Lower lobe of right lung (tissue), 2 donors: ENCODE measurements at regions of chr5 and their contacts with region 1.

Region 1: GRCh38 chr5:53095931-53096525 is 13.5 kb downstream of the MOCS2 start:
- DNase-seq: no peak
- ATAC-seq: peak; percentile 83 to 88
- H3K4me3 ChIP-seq: no peak overlapping the region
- H3K27ac ChIP-seq: no peak overlapping the region
- H3K4me1 ChIP-seq: no peaks in the 10 kb centered on the region
- H3K27me3 ChIP-seq: no peaks in the 10 kb centered on the region
- CTCF ChIP-seq: peak; percentile 89

Region 2: DNA sequence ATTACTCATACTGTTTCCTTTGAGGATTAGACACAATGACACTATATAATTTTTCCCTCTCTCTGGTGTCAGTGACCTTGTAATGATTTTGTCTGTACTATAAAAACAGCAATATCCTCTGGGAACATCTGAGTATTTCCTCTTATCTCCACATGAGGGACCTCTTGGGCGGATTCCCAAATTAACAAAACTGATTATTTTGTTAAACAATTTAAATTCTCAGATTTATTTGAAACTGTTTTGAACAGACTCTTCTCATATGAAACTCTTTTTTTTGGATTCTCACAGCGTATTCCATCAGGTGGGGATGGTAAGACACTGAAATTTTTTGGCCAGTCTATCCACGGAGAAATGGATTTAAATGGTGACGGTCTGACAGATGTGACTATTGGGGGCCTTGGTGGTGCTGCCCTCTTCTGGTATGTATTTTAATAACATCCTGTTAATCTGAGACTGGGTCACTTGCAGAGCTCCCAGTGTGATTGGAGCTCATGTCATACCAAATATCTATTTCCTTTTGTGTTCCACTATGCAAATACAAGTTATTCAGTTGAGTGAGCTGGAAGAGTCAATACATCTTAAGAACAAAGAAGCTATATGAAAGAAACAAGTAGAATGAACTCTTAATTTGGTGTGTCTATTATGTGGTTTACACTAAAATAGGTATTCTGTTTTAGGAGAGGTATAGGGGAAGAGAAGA is 180.7 kb before region 1 on chr5:
- intact Hi-C with region 1: no loop called
- DNase-seq: no peak
- ATAC-seq: peak; percentile 91 to 95
- H3K4me3 ChIP-seq: peak overlapping the region; percentile 30
- H3K27ac ChIP-seq: no peak overlapping the region
- H3K4me1 ChIP-seq: peaks cover 6% of the 10 kb centered on the region
- H3K27me3 ChIP-seq: no peaks in the 10 kb centered on the region
- CTCF ChIP-seq: peak; percentile 75

Region 3: DNA sequence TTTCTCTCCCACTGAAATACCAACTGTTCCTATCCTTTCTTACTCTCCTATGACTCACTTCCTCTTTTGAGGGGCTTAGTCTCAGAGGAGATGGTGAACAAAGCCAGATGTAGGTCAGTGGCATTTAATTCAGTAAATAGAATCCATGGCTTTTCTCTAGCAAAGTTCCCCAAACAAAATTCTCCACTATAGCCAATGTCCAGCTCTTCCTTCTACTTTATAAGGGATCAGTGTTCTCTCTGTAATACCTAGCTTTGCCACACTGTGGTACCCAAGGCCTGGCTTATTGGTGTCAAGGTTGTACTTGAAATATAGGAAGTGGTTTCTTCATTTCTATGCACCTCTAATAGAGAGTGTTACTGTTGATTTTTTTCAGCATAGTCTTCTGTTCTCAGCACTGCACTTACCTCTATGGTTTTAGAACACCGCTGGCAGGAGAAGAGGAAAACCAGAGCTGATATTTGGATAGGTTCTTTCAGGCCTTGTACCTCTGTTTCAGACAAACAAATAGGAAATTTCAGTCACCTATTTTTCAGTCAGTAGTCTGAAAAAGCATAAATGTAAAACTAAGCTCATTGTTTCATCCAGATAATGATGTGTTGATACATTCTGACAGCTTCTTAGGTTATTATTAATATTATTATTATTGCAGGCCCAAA is 147.5 kb before region 1 on chr5:
- intact Hi-C with region 1: loop called (anchors 5 kb)
- DNase-seq: no peak
- ATAC-seq: peak; percentile 91 to 95
- H3K4me3 ChIP-seq: no peak overlapping the region
- H3K27ac ChIP-seq: no peak overlapping the region
- H3K4me1 ChIP-seq: peaks cover 16% of the 10 kb centered on the region
- H3K27me3 ChIP-seq: no peaks in the 10 kb centered on the region
- CTCF ChIP-seq: peak; percentile 78